Breast epithelium (tissue), 4 donors: ENCODE measurements at regions of chr12 and their contacts with region 1.

Region 1: GRCh38 chr12:3398196-3398789 is 92.7 kb upstream of the PRMT8 start:
- DNase-seq: no peak
- H3K4me3 ChIP-seq: no peak overlapping the region
- H3K27ac ChIP-seq: no peak overlapping the region
- H3K4me1 ChIP-seq: no peaks in the 10 kb centered on the region
- H3K27me3 ChIP-seq: peaks cover 0 to 9% of the 10 kb centered on the region in 2 donors
- CTCF ChIP-seq: no peak
- POLR2A ChIP-seq: no peak

Region 2: DNA sequence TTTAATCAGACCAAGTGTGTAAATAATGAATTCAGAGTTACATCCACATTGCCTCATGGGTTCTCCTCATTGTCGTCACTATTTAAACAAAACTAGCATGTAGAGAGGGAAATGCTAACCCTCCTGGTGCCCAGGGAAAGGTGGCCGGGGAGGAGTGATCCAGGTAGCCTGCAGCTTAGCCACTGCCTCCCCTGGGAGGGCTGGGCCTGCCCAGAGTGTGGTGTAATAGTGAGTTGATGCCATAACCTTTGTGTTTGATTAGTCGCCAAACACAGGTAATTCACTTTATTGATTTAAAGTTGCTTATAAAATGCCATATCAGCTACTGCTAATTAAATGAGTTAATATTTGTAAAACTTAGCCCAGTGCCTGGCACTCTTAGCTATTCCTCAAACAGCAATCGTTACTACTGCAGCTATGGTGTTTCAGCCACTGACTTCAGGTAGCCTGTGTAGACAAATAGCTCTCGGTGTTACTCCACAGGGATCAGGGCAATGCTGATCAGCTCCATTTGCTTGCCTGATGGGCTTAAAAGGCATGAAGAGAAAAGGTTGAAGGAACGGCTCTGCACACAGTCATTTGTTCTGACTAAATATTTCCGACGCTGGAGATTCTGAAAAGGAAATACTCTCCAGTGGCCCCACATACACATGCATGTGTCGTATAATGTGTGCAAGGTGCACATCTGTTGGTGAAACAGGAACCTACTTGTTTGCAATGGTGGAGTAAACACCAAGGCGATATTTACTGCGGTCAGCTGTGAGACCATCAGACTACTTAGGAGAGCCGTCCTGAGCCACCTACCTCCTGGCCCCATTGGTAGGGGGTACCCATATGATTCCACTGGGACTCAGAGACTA is 47.1 kb after region 1 on chr12:
- intact Hi-C with region 1: no loop called
- DNase-seq: no peak
- H3K4me3 ChIP-seq: no peak overlapping the region
- H3K27ac ChIP-seq: no peak overlapping the region
- H3K4me1 ChIP-seq: no peaks in the 10 kb centered on the region
- H3K27me3 ChIP-seq: no peaks in the 10 kb centered on the region
- CTCF ChIP-seq: no peak
- POLR2A ChIP-seq: no peak

Region 3: DNA sequence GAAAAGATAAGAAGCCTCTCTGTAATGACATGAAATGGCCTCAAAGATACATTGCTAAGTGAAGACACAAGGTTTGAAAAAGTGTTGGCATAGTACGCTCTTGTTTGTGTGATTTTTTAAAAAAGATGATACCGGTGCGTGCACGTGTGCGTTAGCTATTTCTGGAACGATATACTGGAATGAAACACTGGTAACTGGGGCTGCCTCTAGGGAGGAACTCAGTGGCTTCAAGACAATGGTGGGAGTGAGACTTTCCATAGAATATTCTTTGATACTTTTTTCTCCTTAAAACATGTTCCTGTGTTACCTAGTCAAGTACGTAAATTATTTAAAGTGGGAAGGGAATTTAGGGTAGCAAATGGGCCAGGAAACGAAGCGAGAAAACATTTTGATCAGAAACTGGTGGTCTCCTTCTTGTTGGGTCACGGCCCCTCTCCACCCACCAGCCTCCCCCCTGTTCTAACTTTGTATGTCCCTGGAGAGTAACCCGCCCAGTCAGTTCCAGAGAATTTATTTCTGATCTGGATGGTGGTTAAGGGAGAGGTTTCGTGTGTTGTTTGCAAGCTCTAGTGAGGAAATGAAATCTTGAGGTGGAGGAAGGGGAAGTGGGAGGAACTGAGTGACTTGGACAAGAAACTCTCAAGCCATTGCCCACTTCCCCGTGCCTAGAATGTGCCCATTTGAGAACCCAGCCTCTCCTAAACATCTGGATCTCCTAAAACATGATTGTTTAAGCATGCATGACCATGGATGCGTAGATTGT is 1040.7 kb after region 1 on chr12:
- intact Hi-C with region 1: loop called (anchors 10 kb)
- DNase-seq: no peak
- H3K4me3 ChIP-seq: no peak overlapping the region
- H3K27ac ChIP-seq: no peak overlapping the region
- H3K4me1 ChIP-seq: no peaks in the 10 kb centered on the region
- H3K27me3 ChIP-seq: peaks cover 0 to 10% of the 10 kb centered on the region in 2 donors
- CTCF ChIP-seq: no peak
- POLR2A ChIP-seq: no peak